Heart left ventricle (tissue), 16 donors: ENCODE measurements at regions of chr2 and their contacts with region 1.

Region 1: GRCh38 chr2:46776687-46777327 is 138.8 kb downstream of the MCFD2 start:
- DNase-seq: peak in 3 of 5 donors; percentile 35 to 54 (median 43)
- ATAC-seq: no peak
- H3K4me3 ChIP-seq: no peak overlapping the region
- H3K27ac ChIP-seq: no peak overlapping the region
- H3K4me1 ChIP-seq: peaks cover 0 to 38% (median 28%) of the 10 kb centered on the region in 12 donors
- H3K27me3 ChIP-seq: no peaks in the 10 kb centered on the region
- CTCF ChIP-seq: peak; percentile 43 to 76 (median 62)
- POLR2A ChIP-seq: no peak

Region 2: GRCh38 chr2:46650556-46651001 is 126.2 kb before region 1 on chr2:
- intact Hi-C with region 1: loop called in 5 of 10 experiments (anchors 5 to 10 kb)
- DNase-seq: peak in 4 of 5 donors; percentile 57 to 70 (median 64)
- ATAC-seq: peak in 3 of 4 donors; percentile 68 to 80 (median 75)
- H3K4me3 ChIP-seq: no peak overlapping the region
- H3K27ac ChIP-seq: no peak overlapping the region
- H3K4me1 ChIP-seq: peaks cover 0 to 11% (median 6%) of the 10 kb centered on the region in 12 donors
- H3K27me3 ChIP-seq: no peaks in the 10 kb centered on the region
- CTCF ChIP-seq: peak; percentile 86 to 99 (median 96)
- POLR2A ChIP-seq: no peak

Region 3: GRCh38 chr2:46657042-46657504 is 119.7 kb before region 1 on chr2:
- intact Hi-C with region 1: loop called in 5 of 10 experiments (anchors 5 to 10 kb)
- DNase-seq: peak in 1 of 5 donors; percentile 40
- ATAC-seq: peak in 3 of 4 donors; percentile 45 to 83 (median 76)
- H3K4me3 ChIP-seq: no peak overlapping the region
- H3K27ac ChIP-seq: peak overlapping the region in 3 of 12 donors; percentile 14 to 41 (median 37)
- H3K4me1 ChIP-seq: peaks cover 0 to 18% (median 12%) of the 10 kb centered on the region in 12 donors
- H3K27me3 ChIP-seq: no peaks in the 10 kb centered on the region
- CTCF ChIP-seq: peak in 11 of 12 donors; percentile 14 to 47 (median 29)
- POLR2A ChIP-seq: no peak

Region 4: GRCh38 chr2:46699934-46700256 is 76.9 kb before region 1 on chr2:
- intact Hi-C with region 1: loop called in 3 of 10 experiments (anchors 10 kb)
- DNase-seq: no peak
- ATAC-seq: no peak
- H3K4me3 ChIP-seq: peak overlapping the region; percentile 62 to 94 (median 84)
- H3K27ac ChIP-seq: peak overlapping the region; percentile 88 to 97 (median 94)
- H3K4me1 ChIP-seq: peaks cover 0 to 55% (median 37%) of the 10 kb centered on the region in 12 donors
- H3K27me3 ChIP-seq: no peaks in the 10 kb centered on the region
- CTCF ChIP-seq: no peak
- POLR2A ChIP-seq: no peak

Region 5: DNA sequence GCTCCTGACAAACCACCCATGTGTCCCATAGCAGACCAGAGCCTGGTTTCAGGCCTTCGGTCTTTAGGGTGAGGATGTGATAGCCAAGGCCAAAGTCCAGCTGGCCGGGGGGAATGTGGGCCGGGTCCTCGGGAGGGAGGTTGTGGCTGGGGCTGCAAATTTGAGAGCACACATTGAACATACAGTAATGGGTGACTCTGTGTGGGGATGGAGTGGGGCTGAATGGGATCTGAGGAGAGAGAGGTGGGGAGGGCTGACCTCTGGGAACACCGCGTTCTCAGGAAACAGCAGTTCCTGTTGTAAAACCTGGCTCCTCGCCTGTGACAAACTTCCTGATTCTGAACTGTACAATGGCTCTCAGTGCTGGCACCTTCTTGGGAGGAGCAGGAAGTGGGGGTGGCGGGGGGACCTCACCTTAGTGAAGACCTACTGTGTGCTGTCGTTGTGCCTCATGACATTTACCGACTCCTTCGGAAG is 90.0 kb after region 1 on chr2:
- intact Hi-C with region 1: loop called in 1 of 10 experiments (anchors 5 kb)
- DNase-seq: peak in 4 of 5 donors; percentile 65 to 80 (median 78)
- ATAC-seq: peak; percentile 75 to 95 (median 80)
- H3K4me3 ChIP-seq: no peak overlapping the region
- H3K27ac ChIP-seq: peak overlapping the region; percentile 55 to 79 (median 73)
- H3K4me1 ChIP-seq: peaks cover 0 to 50% (median 11%) of the 10 kb centered on the region in 12 donors
- H3K27me3 ChIP-seq: no peaks in the 10 kb centered on the region
- CTCF ChIP-seq: no peak
- POLR2A ChIP-seq: no peak